Activated naive CD4-positive, alpha-beta T cell treated with anti-CD3 and anti-CD28 coated beads, Interleukin-2, amount 10 ng/mL, durations not matched to agents 7 days and 5 days (primary cell): ENCODE measurements at regions of chr7 and their contacts with region 1.

Region 1: DNA sequence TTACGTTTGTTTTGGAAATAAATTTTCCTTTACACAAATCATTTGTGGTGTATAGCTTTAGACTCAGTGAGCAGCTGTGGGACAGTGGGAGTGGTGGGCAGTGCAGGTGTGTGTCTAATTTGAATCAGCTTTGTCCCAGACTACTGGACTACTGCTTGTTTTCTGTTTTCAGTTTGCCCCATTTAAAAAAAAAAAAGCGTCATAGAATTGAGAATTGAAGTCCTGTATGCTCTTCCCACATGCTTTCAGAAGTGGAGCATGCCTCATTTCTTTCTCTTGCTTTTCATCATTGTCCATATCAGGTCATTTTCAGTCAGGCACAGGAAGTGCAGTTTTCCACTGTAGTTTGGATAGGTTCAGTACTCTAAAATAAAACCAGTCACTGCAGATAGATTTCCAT is 66.1 kb downstream of the SHH start:
- DNase-seq: no peak
- H3K4me3 Mint-ChIP-seq: no peak overlapping the region
- H3K27ac Mint-ChIP-seq: no peak overlapping the region
- H3K4me1 Mint-ChIP-seq: peaks cover 20% of the 10 kb centered on the region
- H3K27me3 Mint-ChIP-seq: no peaks in the 10 kb centered on the region

Region 2: GRCh38 chr7:155763691-155764437 is 17.7 kb after region 1 on chr7:
- CTCF ChIA-PET with region 1: interaction called, 10 read pairs
- DNase-seq: peak; percentile 79
- H3K4me3 Mint-ChIP-seq: peak overlapping the region; percentile 68
- H3K27ac Mint-ChIP-seq: peak overlapping the region; percentile 98
- H3K4me1 Mint-ChIP-seq: peaks cover 68% of the 10 kb centered on the region
- H3K27me3 Mint-ChIP-seq: no peaks in the 10 kb centered on the region